Left ventricle myocardium superior (tissue), 1 donor: ENCODE measurements at regions of chr18 and their contacts with region 1.

Region 1: GRCh38 chr18:22485808-22486244 is 68.1 kb upstream of the CTAGE1 start:
- DNase-seq: no peak
- ATAC-seq: no peak

Region 2: DNA sequence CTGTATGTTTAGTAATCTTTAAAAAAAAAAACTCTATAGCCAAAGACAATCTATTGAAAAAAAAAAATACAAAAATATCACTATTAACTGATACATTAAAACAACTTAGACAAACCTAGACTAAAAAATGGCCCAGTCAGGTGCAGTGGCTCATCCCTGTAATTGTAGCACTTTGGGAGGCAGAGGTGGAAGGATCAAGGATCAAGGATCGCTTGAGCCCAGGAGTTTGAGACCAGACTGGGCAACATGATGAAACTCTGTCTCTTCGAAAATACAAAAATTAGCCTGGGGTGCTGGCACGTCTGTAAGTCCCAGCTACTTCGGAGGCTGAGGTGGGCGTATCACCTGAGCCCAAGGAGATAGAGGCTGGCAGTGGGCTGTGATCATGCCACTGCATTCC is 901.4 kb before region 1 on chr18:
- intact Hi-C with region 1: no loop called
- DNase-seq: no peak
- ATAC-seq: no peak

Region 3: GRCh38 chr18:22542401-22542835 is 56.6 kb after region 1 on chr18:
- intact Hi-C with region 1: loop called (anchors 10 kb)
- DNase-seq: peak; percentile 53
- ATAC-seq: peak; percentile 47

Region 4: GRCh38 chr18:22625406-22625805 is 139.6 kb after region 1 on chr18:
- intact Hi-C with region 1: no loop called
- DNase-seq: no peak
- ATAC-seq: no peak